Endothelial cell of umbilical vein (primary cell): ENCODE measurements at regions of chr6 and their contacts with region 1.

Region 1: DNA sequence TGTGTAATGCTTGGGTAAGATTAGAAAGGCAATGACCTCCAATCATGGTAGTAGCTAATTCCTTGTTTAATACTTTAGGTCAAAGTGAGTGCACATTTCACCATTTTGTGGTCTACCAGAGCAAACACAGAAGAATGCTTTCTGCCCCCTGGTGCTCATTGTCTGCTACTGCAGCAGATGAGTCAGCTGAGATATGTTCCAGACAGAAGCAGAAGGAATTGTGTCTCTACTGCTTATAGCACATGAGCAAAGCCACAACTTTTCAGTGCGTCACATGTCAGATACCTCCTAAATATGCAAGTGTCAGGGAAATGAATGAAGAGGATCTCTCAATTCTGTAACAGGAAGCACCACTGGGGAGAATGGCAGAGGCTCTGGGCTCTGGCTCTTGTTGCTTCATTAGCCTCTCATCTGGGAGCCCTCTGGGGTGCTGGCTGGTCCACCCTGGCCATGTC is 308.9 kb downstream of the ALDH8A1 start:
- DNase-seq: peak; percentile 84
- H3K4me3 ChIP-seq: no peak overlapping the region
- H3K27ac ChIP-seq: peak overlapping the region; percentile 6
- H3K4me1 ChIP-seq: no peaks in the 10 kb centered on the region
- H3K27me3 ChIP-seq: no peaks in the 10 kb centered on the region
- CTCF ChIP-seq: peak; percentile 86 to 94
- POLR2A ChIP-seq: no peak

Region 2: GRCh38 chr6:134161036-134161435 is 480.0 kb before region 1 on chr6:
- CTCF ChIA-PET with region 1: interaction called, 6 read pairs
- POLR2A ChIA-PET with region 1: interaction called, 8 read pairs
- dilution Hi-C with region 1: no loop called
- intact Hi-C with region 1: loop called (anchors 1 kb)
- DNase-seq: no peak
- H3K4me3 ChIP-seq: no peak overlapping the region
- H3K27ac ChIP-seq: no peak overlapping the region
- H3K4me1 ChIP-seq: no peaks in the 10 kb centered on the region
- H3K27me3 ChIP-seq: no peaks in the 10 kb centered on the region
- CTCF ChIP-seq: no peak
- POLR2A ChIP-seq: no peak

Region 3: GRCh38 chr6:134295953-134296553 is 344.9 kb before region 1 on chr6:
- CTCF ChIA-PET with region 1: interaction called, 33 read pairs
- POLR2A ChIA-PET with region 1: no interaction called
- dilution Hi-C with region 1: no loop called
- intact Hi-C with region 1: loop called (anchors 1 kb)
- DNase-seq: peak; percentile 94
- H3K4me3 ChIP-seq: no peak overlapping the region
- H3K27ac ChIP-seq: peak overlapping the region; percentile 99
- H3K4me1 ChIP-seq: peaks cover 23% of the 10 kb centered on the region
- H3K27me3 ChIP-seq: no peaks in the 10 kb centered on the region
- CTCF ChIP-seq: no peak
- POLR2A ChIP-seq: peak; percentile 81

Region 4: DNA sequence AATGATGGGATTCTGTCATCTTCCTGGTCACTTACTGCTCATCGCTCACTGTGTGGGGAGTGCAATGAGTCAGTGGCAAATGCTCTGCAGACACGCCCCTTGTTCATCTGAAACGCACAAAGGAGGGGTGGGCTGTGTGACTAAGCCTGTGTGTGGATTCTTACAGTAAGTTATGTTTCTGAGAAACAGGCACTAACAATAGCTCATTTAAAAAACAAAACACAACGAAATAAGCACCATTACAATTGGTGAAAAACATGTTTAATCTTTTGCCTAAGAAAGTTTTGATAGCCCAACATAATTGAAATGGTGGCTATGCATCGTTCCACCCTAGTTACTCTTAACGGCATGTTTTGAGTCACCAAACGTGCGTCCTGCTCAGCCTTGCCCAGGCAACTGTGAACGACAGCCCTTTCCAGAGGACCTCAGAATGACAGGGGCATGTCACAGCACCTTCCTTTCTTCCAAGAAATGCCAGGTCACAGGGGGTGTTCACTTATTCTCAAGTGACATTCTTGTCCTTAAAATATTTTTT is 204.7 kb before region 1 on chr6:
- CTCF ChIA-PET with region 1: interaction called, 14 read pairs
- POLR2A ChIA-PET with region 1: no interaction called
- dilution Hi-C with region 1: no loop called
- intact Hi-C with region 1: loop called (anchors 1 kb)
- DNase-seq: peak; percentile 94
- H3K4me3 ChIP-seq: peak overlapping the region in 1 of 3 experiments; percentile 3
- H3K27ac ChIP-seq: peak overlapping the region; percentile 88
- H3K4me1 ChIP-seq: peaks cover 20% of the 10 kb centered on the region
- H3K27me3 ChIP-seq: no peaks in the 10 kb centered on the region
- CTCF ChIP-seq: no peak
- POLR2A ChIP-seq: no peak

Region 5: DNA sequence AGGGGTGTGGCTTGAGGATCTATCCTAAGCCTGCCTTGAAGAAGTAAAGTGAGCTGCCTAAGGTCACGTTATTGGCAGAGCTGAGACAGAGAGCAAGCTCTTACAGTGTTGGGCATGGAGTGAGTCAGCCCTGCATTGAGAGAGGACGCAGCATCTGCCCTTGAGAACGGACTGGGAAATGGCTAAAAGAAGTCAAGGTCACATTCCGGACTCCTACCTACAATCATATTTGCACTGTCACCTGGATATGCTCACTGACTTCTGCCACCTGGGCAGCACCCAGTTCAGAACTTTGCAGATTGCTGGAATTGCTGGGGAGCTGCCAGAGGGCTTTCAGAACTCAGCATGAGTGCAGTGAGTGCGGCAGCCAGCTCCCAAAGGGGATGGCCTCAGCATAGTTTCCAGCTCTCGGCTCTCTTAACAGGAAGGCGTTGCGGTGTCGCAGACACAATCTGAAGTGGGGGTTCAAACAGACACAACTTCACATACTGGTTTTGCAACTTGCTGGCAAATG is 123.8 kb before region 1 on chr6:
- CTCF ChIA-PET with region 1: interaction called, 11 read pairs
- POLR2A ChIA-PET with region 1: no interaction called
- dilution Hi-C with region 1: no loop called
- intact Hi-C with region 1: no loop called
- DNase-seq: peak; percentile 75
- H3K4me3 ChIP-seq: no peak overlapping the region
- H3K27ac ChIP-seq: peak overlapping the region; percentile 65
- H3K4me1 ChIP-seq: peaks cover 38% of the 10 kb centered on the region
- H3K27me3 ChIP-seq: no peaks in the 10 kb centered on the region
- CTCF ChIP-seq: no peak
- POLR2A ChIP-seq: no peak

Region 6: DNA sequence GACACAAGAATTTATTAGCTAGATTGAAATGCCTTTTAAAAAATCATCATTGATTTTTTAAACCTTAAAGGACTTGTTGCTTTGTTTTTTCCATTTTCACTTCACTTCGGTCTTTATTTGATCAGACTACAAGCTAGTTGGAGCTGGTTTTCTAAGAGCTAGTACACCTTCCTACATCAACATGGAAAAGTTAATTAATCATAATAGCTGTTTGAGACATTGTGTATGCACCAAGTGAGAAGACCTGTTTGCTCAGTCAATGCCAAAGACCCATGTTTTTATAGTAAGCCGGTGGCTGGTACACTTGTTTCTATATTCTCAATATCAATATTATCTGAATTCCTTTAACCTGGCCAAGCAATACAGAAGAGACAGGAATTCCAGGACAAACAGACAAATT is 12.8 kb before region 1 on chr6:
- CTCF ChIA-PET with region 1: interaction called, 15 read pairs
- POLR2A ChIA-PET with region 1: no interaction called
- dilution Hi-C with region 1: no loop called
- intact Hi-C with region 1: no loop called
- DNase-seq: no peak
- H3K4me3 ChIP-seq: no peak overlapping the region
- H3K27ac ChIP-seq: no peak overlapping the region
- H3K4me1 ChIP-seq: no peaks in the 10 kb centered on the region
- H3K27me3 ChIP-seq: no peaks in the 10 kb centered on the region
- CTCF ChIP-seq: no peak
- POLR2A ChIP-seq: no peak

Region 7: GRCh38 chr6:134714679-134715421 is 73.8 kb after region 1 on chr6:
- CTCF ChIA-PET with region 1: no interaction called
- POLR2A ChIA-PET with region 1: no interaction called
- dilution Hi-C with region 1: no loop called
- intact Hi-C with region 1: no loop called
- DNase-seq: peak; percentile 26
- H3K4me3 ChIP-seq: no peak overlapping the region
- H3K27ac ChIP-seq: no peak overlapping the region
- H3K4me1 ChIP-seq: peaks cover 24% of the 10 kb centered on the region
- H3K27me3 ChIP-seq: no peaks in the 10 kb centered on the region
- CTCF ChIP-seq: no peak
- POLR2A ChIP-seq: no peak

Region 8: DNA sequence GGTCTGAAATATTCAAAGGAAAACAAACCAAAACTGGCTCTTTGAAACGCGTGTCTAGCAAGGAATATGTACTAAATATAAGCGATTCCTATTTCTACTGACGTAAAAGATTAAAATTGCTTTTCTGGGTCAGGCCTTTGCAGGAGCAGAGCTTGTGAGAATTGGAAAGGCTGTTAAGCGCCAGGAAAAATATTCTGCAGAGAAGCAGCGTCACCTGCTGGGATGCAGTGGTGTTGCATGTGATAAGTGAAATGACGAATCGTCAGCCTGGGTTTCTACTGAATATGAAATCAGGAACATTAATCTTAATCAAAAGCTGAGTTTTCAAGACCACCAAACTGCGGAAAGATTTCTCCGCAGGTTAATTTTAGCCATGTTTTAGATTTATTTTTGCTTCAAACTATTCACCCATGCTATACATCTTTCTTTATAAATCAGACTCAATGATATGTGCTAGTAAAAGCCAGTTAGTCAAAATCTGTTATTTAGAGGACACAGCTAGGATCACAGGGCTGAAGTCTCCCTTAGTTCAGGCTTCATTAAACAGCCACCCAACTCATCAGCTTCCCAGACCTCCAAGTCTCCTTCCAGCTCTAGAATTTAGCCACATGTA is 241.5 kb after region 1 on chr6:
- CTCF ChIA-PET with region 1: no interaction called
- POLR2A ChIA-PET with region 1: no interaction called
- dilution Hi-C with region 1: no loop called
- intact Hi-C with region 1: loop called (anchors 1 kb)
- DNase-seq: peak; percentile 79
- H3K4me3 ChIP-seq: no peak overlapping the region
- H3K27ac ChIP-seq: peak overlapping the region; percentile 3
- H3K4me1 ChIP-seq: peaks cover 13% of the 10 kb centered on the region
- H3K27me3 ChIP-seq: no peaks in the 10 kb centered on the region
- CTCF ChIP-seq: peak; percentile 82
- POLR2A ChIP-seq: no peak